ENCODE measurements at regions of chr6 and their contacts with region 1.

Region 1: GRCh38 chr6:110682460-110682853 is 132.8 kb downstream of the CDK19 start:
- DNase-seq: peak; percentile 17
- H3K4me3 ChIP-seq: no peak overlapping the region
- CTCF ChIP-seq: peak; percentile 59

Region 2: GRCh38 chr6:110543106-110543505 is 139.4 kb before region 1 on chr6:
- CTCF ChIA-PET with region 1: no interaction called
- POLR2A ChIA-PET with region 1: no interaction called
- DNase-seq: no peak
- H3K4me3 ChIP-seq: no peak overlapping the region
- CTCF ChIP-seq: no peak

Region 3: GRCh38 chr6:110664933-110665332 is 17.5 kb before region 1 on chr6:
- CTCF ChIA-PET with region 1: interaction called, 23 read pairs
- POLR2A ChIA-PET with region 1: no interaction called
- DNase-seq: peak; percentile 7
- H3K4me3 ChIP-seq: no peak overlapping the region
- CTCF ChIP-seq: no peak

Region 4: GRCh38 chr6:110699780-110700179 is 17.3 kb after region 1 on chr6:
- CTCF ChIA-PET with region 1: interaction called, 10 read pairs
- POLR2A ChIA-PET with region 1: no interaction called
- DNase-seq: no peak
- H3K4me3 ChIP-seq: no peak overlapping the region
- CTCF ChIP-seq: no peak

Region 5: GRCh38 chr6:110714143-110714542 is 31.7 kb after region 1 on chr6:
- CTCF ChIA-PET with region 1: no interaction called
- POLR2A ChIA-PET with region 1: no interaction called
- DNase-seq: no peak
- H3K4me3 ChIP-seq: no peak overlapping the region
- CTCF ChIP-seq: no peak

Region 6: DNA sequence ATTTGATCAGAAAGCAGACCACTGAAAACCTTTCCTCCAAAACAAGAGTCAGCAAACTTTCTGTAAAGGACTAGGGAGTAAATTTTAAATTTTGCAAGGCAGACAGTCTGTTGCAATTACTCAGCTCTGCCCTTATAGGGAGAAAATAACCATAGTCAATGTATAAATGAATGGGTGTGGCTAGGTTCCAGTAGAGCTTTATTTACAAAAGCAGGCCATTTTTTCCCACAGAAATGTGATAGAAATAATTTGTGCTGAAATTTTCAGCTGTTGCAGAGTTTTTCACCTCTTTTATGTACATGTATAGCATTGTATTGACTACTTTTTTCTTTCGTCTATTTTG is 199.8 kb after region 1 on chr6:
- CTCF ChIA-PET with region 1: interaction called, 51 read pairs
- POLR2A ChIA-PET with region 1: no interaction called
- DNase-seq: no peak
- H3K4me3 ChIP-seq: no peak overlapping the region
- CTCF ChIP-seq: no peak

Region 7: GRCh38 chr6:110958329-110959192 is 276.1 kb after region 1 on chr6 and contains the start of gene GTF3C6:
- CTCF ChIA-PET with region 1: interaction called, 155 read pairs
- POLR2A ChIA-PET with region 1: interaction called, 7 read pairs
- DNase-seq: peak; percentile 65
- H3K4me3 ChIP-seq: peak within 1 kb of the TSS; percentile 89
- CTCF ChIP-seq: no peak

Region 8: DNA sequence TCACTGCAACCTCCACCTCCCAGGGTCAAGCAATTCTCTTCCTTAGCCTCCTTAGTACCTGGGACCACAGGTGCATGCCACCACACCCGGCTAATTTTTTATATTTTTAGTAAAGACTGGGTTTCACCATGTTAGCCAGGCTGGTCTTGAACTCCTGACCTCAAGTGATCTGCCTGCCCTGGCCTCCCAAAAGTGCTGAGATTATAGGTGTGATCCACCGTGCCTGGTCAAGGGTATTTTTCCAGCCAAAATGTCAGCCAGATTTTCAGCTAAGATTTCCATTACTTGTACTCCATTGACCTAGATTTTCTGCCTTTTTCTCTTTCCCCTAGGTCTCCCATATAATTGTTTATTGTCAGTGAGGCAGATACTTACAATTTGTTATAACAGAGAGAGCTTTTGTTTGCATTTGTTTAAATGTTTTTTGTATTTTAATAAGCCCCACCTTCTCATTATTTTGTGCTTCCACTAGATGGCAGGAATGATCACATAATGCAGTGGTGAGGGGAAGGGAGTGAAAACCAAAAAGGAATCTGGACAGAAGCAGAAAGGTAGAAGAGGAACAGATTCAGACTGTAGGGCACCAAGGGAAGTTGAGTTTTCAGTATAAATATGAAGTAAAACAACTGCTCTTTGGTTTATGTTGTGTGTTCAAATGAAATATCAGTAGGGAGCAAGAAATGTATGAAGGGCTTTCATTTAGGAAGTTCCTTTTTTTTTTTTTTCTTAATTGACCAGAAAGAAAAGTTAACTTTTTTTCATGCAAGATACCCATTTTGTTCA is 329.1 kb after region 1 on chr6:
- CTCF ChIA-PET with region 1: interaction called, 10 read pairs
- POLR2A ChIA-PET with region 1: no interaction called
- DNase-seq: no peak
- H3K4me3 ChIP-seq: no peak overlapping the region
- CTCF ChIP-seq: peak; percentile 52